Activated naive CD4-positive, alpha-beta T cell treated with anti-CD3 and anti-CD28 coated beads for 36 hours (primary cell): ENCODE measurements at regions of chr18 and their contacts with region 1.

Region 1: GRCh38 chr18:26090130-26091046 is at the start of gene SS18:
- DNase-seq: peak; percentile 95
- H3K4me3 Mint-ChIP-seq: peak within 1 kb of the TSS; percentile 93
- H3K27ac Mint-ChIP-seq: peak within 1 kb of the TSS; percentile 98
- H3K4me1 Mint-ChIP-seq: peaks cover 32% of the 10 kb centered on the region
- H3K27me3 Mint-ChIP-seq: no peaks in the 10 kb centered on the region
- total RNA-seq, gene SS18: 42.2 to 42.9 TPM

Region 2: DNA sequence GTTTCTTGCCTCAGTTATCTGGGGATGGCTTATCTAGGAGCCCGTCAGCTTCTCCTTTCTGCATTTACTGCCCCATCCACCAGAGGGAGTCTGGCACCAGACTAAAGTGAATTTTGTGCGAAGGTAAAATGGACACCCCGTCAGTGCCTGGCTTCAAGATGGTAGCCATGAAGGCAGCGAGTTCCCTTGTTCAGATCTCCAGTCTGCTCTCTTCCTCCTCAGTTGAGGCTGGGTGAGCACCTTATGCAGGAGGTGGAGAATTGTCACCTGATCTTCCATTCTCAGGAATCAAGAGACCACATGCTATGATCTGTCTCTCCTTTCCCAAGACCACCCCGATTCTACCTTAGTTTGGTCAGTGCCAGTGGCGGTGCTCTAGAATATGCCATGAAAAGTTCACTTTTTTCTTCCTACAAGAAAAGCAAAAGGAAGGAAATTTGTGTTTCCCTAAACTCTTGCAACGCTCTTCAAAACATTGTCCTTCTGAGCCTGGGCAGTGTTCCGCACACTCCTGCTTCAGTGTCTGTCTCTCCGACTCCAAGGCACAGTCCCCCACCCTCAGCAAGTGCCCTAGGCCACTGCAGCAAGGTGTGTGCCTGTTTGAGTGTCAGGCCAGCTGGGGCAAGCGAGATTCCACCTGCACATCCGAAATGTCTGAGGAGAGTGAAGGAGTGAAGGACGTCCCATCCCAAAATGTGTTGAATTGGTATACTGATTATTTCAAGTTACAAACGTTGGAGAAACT is 168.5 kb before region 1 on chr18:
- CTCF ChIA-PET with region 1: no interaction called
- intact Hi-C with region 1: loop called (anchors 2 kb)
- DNase-seq: peak; percentile 65
- H3K4me3 Mint-ChIP-seq: no peak overlapping the region
- H3K27ac Mint-ChIP-seq: no peak overlapping the region
- H3K4me1 Mint-ChIP-seq: no peaks in the 10 kb centered on the region
- H3K27me3 Mint-ChIP-seq: peaks cover 3% of the 10 kb centered on the region

Region 3: DNA sequence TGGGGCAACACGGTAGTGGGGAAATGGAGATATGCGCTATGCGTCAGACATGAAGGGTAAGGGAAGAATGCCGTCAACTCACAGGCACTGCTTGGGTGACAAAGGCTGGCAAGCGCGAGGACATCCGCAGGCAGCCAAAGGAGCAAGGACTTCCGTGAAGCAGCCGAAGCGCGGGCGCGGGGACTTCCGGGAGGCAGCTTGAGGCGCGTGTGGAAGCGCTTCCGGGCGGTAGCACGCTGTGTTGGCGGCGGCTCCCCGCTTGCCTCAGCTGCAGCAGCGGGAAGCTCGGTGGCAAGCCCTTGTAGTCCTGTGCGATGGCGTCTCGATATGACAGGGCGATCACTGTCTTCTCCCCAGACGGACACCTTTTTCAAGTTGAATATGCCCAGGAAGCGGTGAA is 43.3 kb after region 1 on chr18 and contains the start of gene PSMA8:
- CTCF ChIA-PET with region 1: no interaction called
- intact Hi-C with region 1: loop called (anchors 1 kb)
- DNase-seq: peak; percentile 68
- H3K4me3 Mint-ChIP-seq: peak within 1 kb of the TSS; percentile 70
- H3K27ac Mint-ChIP-seq: peak within 1 kb of the TSS; percentile 79
- H3K4me1 Mint-ChIP-seq: no peaks in the 10 kb centered on the region
- H3K27me3 Mint-ChIP-seq: no peaks in the 10 kb centered on the region
- total RNA-seq, gene PSMA8: 2.1 TPM

Region 4: GRCh38 chr18:26190506-26190905 is 100.1 kb after region 1 on chr18:
- CTCF ChIA-PET with region 1: no interaction called
- intact Hi-C with region 1: loop called (anchors 1 kb)
- DNase-seq: peak; percentile 49
- H3K4me3 Mint-ChIP-seq: peak overlapping the region; percentile 74
- H3K27ac Mint-ChIP-seq: peak overlapping the region; percentile 63
- H3K4me1 Mint-ChIP-seq: peaks cover 13% of the 10 kb centered on the region
- H3K27me3 Mint-ChIP-seq: no peaks in the 10 kb centered on the region

Region 5: GRCh38 chr18:26226229-26227005 is 136.0 kb after region 1 on chr18 and contains the start of gene TAF4B:
- CTCF ChIA-PET with region 1: no interaction called
- intact Hi-C with region 1: loop called (anchors 1 kb)
- DNase-seq: peak; percentile 95
- H3K4me3 Mint-ChIP-seq: peak within 1 kb of the TSS; percentile 92
- H3K27ac Mint-ChIP-seq: peak within 1 kb of the TSS; percentile 94
- H3K4me1 Mint-ChIP-seq: peaks cover 32% of the 10 kb centered on the region
- H3K27me3 Mint-ChIP-seq: no peaks in the 10 kb centered on the region
- total RNA-seq, gene TAF4B: 15.9 to 16.3 TPM

Region 6: DNA sequence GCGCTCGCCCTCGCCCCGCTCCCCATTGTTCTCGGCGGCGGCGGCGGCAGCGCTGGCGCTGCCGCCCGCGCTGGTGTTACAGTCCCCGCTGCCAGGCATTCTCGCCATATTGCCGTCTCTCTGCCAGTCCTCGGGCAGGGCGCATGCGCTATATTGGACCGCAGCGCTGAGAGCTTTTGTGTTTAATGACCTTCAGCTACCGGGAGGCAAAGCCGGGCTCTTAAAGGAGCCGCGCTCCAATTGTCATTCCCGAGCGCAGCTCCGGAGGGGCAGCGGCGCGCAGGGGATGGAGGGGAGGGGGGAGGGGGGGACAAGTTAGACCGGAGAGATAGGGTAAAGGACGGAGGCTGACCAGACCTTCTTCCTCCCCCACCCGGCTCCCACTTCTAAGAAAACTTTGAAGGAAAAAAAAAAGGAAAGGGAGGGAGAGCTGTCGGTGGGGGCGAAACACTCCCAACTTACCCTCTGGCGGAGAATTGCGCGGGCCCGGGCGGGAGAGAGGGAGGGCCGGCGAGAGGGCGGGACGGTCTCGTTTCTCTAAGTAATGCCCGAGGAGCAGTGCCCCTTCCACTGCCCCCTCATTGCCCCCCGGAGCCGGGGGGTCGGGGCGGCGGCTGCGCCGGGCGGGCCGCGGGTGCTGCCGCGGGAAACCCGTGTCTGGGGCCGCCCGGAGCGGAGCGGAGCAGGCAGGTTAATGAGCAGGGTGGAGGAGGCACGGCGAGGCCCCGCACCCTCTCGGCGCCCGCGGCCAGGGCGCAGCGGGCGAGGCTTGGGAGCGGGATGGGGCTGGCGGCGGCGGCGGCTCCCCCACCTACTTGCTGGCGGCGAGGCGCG is 458.3 kb after region 1 on chr18 and contains the start of gene KCTD1:
- CTCF ChIA-PET with region 1: no interaction called
- intact Hi-C with region 1: loop called (anchors 1 kb)
- DNase-seq: peak; percentile 76
- H3K4me3 Mint-ChIP-seq: peak within 1 kb of the TSS; percentile 79
- H3K27ac Mint-ChIP-seq: no peak within 1 kb of the TSS
- H3K4me1 Mint-ChIP-seq: peaks cover 30% of the 10 kb centered on the region
- H3K27me3 Mint-ChIP-seq: peaks cover 36% of the 10 kb centered on the region
- total RNA-seq, gene KCTD1: 1.7 to 1.9 TPM